ENCODE measurements at regions of chr11 and their contacts with region 1.

Region 1: DNA sequence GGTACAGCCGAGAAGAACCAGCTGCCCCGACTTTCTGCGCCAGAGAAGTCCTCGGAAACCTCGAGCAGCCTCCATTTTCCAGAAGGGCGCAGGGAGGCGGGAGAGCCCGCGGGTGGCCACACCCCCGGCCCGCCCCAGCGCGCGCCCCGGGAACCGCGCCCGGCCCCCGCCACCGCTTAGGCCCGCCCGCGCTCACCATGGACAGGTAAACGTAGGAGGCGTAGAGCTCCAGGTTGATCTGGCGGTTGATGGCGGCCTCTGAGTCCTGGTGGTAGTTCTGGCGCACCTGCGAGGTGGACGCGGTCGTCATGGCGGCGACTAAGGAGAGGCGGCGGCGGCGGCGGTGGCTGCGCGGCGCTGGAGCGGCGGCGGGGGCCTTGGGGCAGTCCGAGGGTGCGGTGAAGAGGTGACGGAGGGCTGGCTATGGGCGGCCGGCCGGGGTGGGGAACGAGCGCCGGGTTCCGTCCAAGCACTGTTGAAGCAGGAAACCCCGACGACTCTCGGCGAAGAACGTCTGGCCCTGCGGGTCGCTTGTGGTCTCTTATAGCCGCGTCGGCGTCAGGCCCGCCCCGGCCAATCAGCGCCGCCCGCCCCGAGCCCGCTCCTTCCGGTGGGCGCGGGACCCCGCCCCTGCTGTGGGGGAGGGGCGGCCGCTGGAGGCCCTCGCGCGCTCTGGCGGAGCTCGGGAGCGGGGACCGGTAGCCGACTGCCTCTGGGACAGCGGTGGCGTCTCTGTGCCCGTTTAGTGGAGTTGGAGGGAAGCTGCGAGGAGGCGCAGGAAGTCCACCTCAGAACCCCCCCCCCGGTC is at the start of gene FTH1:
- DNase-seq: peak; percentile 90
- H3K4me3 Mint-ChIP-seq: peak within 1 kb of the TSS; percentile 90
- H3K27ac Mint-ChIP-seq: peak within 1 kb of the TSS; percentile 97
- H3K4me1 Mint-ChIP-seq: peaks cover 58% of the 10 kb centered on the region
- H3K27me3 Mint-ChIP-seq: no peaks in the 10 kb centered on the region
- CTCF ChIP-seq: no peak
- total RNA-seq, gene FTH1: 8,367 and 15,492 TPM in 2 replicates

Region 2: DNA sequence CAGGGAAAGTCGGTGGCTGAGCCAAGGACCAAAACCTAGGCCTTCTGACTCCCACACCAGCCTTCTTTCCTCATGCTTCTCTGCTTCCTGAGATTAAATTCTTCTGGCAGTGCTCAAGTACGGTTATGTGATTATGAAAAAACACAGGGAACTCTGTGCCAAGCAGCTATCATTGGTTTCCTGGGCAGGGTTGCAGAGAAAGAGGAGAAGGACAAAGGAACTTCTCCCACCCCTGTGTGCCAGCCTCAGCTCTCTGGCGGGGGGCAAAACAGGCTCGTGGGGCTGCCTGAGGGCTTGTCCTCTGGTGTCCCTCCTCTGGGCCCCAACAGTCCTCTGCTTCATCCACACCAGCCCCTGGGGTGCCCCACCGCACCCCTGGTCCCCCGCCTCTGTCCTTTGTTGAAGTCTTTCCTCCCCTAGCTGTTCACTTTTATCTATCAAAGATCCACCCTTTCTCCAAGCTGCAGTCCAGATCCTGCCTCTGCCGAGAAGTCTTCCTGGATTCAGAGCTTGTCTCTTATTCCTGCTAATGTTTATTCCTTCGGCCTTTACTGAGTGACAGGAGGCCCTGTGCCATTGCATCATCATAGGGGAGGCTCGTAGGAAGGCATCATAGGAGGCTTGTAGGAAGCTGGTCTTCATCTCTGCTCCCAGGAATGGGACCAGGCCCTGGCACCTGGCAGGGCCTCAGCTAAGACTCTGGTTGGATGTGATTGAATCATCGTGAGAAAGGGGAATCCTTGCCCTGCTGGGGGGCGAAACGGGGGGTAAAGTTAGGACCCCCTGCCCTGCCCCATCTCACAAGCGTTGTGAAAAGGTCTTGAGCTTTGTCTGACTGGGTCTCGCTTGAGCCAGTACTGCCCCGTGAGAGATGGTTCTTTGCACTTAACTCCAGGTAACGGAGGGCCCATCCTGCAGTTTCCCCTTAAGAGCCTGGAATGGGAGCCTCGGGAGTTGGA is 11.7 kb after region 1 on chr11:
- CTCF ChIA-PET with region 1: interaction called, 8 read pairs
- POLR2A ChIA-PET with region 1: interaction called, 216 read pairs
- intact Hi-C with region 1: no loop called
- DNase-seq: peak; percentile 59
- H3K4me3 Mint-ChIP-seq: no peak overlapping the region
- H3K27ac Mint-ChIP-seq: peak overlapping the region; percentile 84
- H3K4me1 Mint-ChIP-seq: peaks cover 33% of the 10 kb centered on the region
- H3K27me3 Mint-ChIP-seq: no peaks in the 10 kb centered on the region
- CTCF ChIP-seq: no peak

Region 3: DNA sequence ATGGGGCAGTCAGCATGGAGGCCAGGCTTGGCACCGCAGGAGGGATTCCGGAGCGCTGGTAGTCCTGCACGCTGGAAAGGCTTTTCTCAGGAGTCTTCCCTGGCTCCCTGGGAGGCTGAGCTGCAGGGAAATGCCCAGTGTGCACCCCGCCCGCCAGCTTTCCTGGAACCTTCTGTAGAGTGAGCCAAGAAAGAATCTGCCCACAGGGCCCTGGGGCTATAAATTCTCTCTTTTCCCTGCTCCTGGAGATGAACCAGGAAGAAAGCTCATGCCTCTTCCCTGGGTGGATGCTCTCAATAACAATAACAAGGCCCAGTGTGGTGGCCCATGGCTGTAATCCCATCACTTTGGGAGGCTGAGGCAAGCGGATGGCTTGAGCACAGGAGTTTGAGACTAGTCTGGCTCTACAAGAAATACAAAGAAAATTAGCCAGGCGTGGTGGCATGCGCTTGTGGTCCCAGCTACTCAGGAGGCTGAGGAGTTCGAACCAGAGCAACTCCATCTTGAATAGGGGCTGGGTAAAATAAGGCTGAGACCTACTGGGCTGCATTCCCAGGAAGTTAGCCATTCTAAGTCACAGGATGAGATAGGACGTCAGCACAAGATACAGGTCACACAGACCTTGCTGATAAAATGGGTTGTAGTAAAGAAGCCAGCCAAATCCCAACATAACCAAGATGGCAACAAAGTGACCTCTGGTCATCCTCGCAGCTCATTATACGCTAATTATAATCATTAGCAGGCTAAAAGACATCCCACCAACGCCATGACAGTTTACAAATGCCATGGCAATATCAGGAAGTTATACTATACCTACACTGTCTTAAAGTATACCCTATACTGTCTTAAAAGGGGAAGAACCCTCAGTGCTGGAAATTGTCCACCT is 46.5 kb after region 1 on chr11:
- CTCF ChIA-PET with region 1: interaction called, 3 read pairs
- POLR2A ChIA-PET with region 1: interaction called, 298 read pairs
- intact Hi-C with region 1: loop called (anchors 2 kb)
- DNase-seq: peak; percentile 96
- H3K4me3 Mint-ChIP-seq: peak overlapping the region; percentile 54
- H3K27ac Mint-ChIP-seq: peak overlapping the region; percentile 85
- H3K4me1 Mint-ChIP-seq: peaks cover 20% of the 10 kb centered on the region
- H3K27me3 Mint-ChIP-seq: no peaks in the 10 kb centered on the region
- CTCF ChIP-seq: no peak

Region 4: DNA sequence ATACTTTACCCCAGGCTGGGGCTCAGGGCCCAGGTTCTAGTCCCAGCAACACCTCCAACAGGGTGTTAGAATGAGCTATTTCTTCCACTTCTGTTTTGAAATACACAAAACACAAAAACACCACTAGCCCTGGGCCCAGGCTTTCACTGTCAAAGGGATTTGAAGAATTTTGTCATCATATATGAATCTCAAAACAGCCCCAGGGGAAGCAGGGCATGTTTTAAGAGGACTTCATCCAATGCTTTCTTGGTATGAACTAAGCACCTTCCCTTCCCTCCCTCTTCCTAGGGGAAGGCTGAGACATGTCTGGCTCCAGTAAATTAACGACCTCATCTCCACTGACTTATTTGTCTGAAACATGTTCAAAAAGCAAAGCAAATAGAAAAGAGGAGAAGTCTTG is 80.7 kb after region 1 on chr11:
- CTCF ChIA-PET with region 1: interaction called, 14 read pairs
- POLR2A ChIA-PET with region 1: interaction called, 1,703 read pairs
- intact Hi-C with region 1: loop called (anchors 1 kb)
- DNase-seq: peak; percentile 31
- H3K4me3 Mint-ChIP-seq: peak overlapping the region; percentile 31
- H3K27ac Mint-ChIP-seq: peak overlapping the region; percentile 77
- H3K4me1 Mint-ChIP-seq: peaks cover 35% of the 10 kb centered on the region
- H3K27me3 Mint-ChIP-seq: no peaks in the 10 kb centered on the region
- CTCF ChIP-seq: no peak

Region 5: GRCh38 chr11:62061351-62062222 is 94.3 kb after region 1 on chr11:
- CTCF ChIA-PET with region 1: interaction called, 10 read pairs
- POLR2A ChIA-PET with region 1: interaction called, 4 read pairs
- intact Hi-C with region 1: no loop called
- DNase-seq: peak; percentile 32
- H3K4me3 Mint-ChIP-seq: no peak overlapping the region
- H3K27ac Mint-ChIP-seq: no peak overlapping the region
- H3K4me1 Mint-ChIP-seq: no peaks in the 10 kb centered on the region
- H3K27me3 Mint-ChIP-seq: no peaks in the 10 kb centered on the region
- CTCF ChIP-seq: peak; percentile 38

Measured in MCF 10A (cell line).